ENCODE measurements at regions of chr5 and their contacts with region 1.

Region 1: GRCh38 chr5:110653231-110653970 is 73.1 kb downstream of the TMEM232 start:
- DNase-seq: no peak

Region 2: GRCh38 chr5:110681109-110681508 is 27.7 kb after region 1 on chr5:
- intact Hi-C with region 1: loop called in 1 of 2 experiments (anchors 1 kb)
- DNase-seq: no peak

Measured in posterior vena cava (tissue), 2 donors.